ENCODE measurements at regions of chr13 and their contacts with region 1.

Region 1: DNA sequence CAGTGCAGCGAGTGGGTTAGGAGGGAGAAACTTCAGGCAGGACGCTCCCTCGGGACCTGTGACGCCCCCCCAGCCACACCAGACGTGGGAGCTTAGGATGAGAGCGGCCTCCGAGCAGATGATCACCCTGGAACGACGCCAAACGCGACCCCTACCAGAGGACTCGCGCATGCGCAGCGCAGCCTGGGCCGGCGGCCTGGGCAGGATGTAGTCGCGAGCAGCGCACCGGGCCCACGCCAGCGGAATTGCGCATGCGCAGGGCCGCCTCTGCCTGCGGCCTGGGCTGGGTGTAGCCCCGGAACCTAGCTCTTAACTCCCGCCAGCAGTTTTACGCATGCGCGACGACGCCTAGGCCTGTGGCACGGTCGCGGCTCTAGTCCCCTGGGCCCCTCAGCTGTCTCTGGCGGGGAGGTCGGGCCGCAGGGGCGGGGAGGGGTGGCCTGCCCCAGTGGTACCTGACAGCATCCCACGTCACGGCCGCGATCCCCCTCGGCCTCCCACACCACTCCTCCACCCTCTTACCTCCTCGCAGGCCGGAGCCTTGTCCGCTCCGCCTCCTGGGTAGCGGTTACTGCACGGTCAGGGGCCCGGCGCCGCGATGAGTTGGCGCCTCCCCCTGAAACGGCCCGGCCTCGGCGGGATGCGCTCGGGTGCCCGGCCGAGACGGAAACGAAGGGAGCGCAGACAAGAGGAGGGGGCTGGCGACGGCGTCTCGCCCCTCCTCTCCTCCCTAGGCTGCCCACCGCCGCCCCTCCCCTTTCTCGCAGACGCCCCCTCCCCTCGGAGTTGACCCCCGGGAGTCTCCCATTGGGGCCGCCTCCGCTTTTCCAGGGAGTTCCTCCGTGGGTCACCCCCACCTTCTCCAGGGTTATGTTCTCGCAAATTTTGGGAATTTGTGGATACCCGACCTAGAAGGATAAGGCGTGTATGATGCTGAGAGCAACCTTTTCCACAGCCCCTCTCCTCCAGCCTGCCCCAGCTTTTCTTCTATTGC is at the start of gene RCBTB2:
- DNase-seq: peak; percentile 99
- H3K4me3 Mint-ChIP-seq: peak within 1 kb of the TSS; percentile 93
- H3K27ac Mint-ChIP-seq: peak within 1 kb of the TSS; percentile 95
- H3K4me1 Mint-ChIP-seq: peaks cover 52% of the 10 kb centered on the region
- H3K27me3 Mint-ChIP-seq: no peaks in the 10 kb centered on the region
- total RNA-seq, gene RCBTB2: 35.6 TPM

Region 2: DNA sequence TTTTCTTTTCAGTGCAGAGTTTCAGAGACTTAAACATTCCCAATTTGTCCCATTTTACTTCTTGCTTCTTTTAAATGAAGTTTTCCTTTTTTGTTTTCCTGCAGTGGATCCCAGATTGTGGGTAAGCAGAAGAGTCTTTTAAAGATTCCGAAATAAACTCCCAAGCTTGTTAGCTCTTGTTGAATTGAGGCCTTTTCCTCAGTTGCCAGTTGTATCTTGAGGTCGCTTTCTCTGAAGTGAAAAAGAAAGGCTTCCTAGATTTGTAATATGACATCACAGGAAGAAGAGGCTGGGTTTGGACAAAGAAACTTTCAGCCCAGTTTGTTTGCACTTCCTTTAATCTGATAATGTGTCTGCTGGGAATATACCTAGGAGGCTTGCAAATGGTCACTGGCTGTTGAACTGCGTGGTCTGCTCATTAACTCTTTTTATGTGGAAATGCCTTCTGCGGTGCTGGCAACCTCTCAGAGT is 119.9 kb before region 1 on chr13 and contains the start of gene LPAR6:
- CTCF ChIA-PET with region 1: interaction called, 3 read pairs
- POLR2A ChIA-PET with region 1: interaction called, 24 read pairs
- DNase-seq: peak; percentile 26
- H3K4me3 Mint-ChIP-seq: peak within 1 kb of the TSS; percentile 99
- H3K27ac Mint-ChIP-seq: peak within 1 kb of the TSS; percentile 96
- H3K4me1 Mint-ChIP-seq: peaks cover 42% of the 10 kb centered on the region
- H3K27me3 Mint-ChIP-seq: no peaks in the 10 kb centered on the region
- total RNA-seq, gene LPAR6: 96.8 to 100 TPM

Region 3: DNA sequence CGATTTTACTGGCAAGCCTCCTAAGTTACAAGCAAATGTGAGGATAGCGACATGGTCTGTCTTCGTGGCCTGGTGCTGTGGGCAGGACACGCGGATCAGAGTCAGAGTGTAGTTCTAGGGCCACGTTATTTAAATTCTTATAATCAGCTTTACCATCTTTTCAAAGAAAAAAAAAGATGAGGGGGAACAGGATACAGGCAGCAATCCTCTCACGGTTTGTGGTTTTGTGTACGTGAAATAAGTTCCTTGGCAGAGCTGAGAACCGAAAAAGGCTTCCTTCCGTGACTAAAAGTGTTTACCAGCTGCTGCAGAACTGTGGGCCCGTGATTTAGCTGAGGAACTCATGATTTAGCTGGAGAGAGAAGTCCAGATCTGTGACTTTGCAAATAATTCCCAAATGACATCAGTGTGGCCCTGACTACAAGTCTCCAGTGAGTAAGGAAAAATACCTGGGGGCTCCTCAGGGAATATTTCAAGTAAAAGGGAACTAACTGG is 27.2 kb before region 1 on chr13:
- CTCF ChIA-PET with region 1: interaction called, 13 read pairs
- POLR2A ChIA-PET with region 1: interaction called, 204 read pairs
- DNase-seq: peak; percentile 74
- H3K4me3 Mint-ChIP-seq: peak overlapping the region; percentile 50
- H3K27ac Mint-ChIP-seq: peak overlapping the region; percentile 98
- H3K4me1 Mint-ChIP-seq: peaks cover 82% of the 10 kb centered on the region
- H3K27me3 Mint-ChIP-seq: no peaks in the 10 kb centered on the region

Region 4: GRCh38 chr13:48562296-48563066 is 29.7 kb after region 1 on chr13:
- CTCF ChIA-PET with region 1: interaction called, 29 read pairs
- POLR2A ChIA-PET with region 1: interaction called, 134 read pairs
- DNase-seq: peak; percentile 86
- H3K4me3 Mint-ChIP-seq: peak overlapping the region; percentile 47
- H3K27ac Mint-ChIP-seq: peak overlapping the region; percentile 78
- H3K4me1 Mint-ChIP-seq: peaks cover 61% of the 10 kb centered on the region
- H3K27me3 Mint-ChIP-seq: peaks cover 46% of the 10 kb centered on the region

Region 5: GRCh38 chr13:48580185-48580803 is 47.5 kb after region 1 on chr13:
- CTCF ChIA-PET with region 1: interaction called, 11 read pairs
- POLR2A ChIA-PET with region 1: interaction called, 21 read pairs
- DNase-seq: peak; percentile 72
- H3K4me3 Mint-ChIP-seq: no peak overlapping the region
- H3K27ac Mint-ChIP-seq: no peak overlapping the region
- H3K4me1 Mint-ChIP-seq: peaks cover 38% of the 10 kb centered on the region
- H3K27me3 Mint-ChIP-seq: peaks cover 39% of the 10 kb centered on the region

Region 6: GRCh38 chr13:48643159-48643558 is 110.4 kb after region 1 on chr13:
- CTCF ChIA-PET with region 1: no interaction called
- POLR2A ChIA-PET with region 1: no interaction called
- DNase-seq: no peak
- H3K4me3 Mint-ChIP-seq: no peak overlapping the region
- H3K27ac Mint-ChIP-seq: no peak overlapping the region
- H3K4me1 Mint-ChIP-seq: peaks cover under 1% of the 10 kb centered on the region
- H3K27me3 Mint-ChIP-seq: peaks cover 2% of the 10 kb centered on the region

Region 7: DNA sequence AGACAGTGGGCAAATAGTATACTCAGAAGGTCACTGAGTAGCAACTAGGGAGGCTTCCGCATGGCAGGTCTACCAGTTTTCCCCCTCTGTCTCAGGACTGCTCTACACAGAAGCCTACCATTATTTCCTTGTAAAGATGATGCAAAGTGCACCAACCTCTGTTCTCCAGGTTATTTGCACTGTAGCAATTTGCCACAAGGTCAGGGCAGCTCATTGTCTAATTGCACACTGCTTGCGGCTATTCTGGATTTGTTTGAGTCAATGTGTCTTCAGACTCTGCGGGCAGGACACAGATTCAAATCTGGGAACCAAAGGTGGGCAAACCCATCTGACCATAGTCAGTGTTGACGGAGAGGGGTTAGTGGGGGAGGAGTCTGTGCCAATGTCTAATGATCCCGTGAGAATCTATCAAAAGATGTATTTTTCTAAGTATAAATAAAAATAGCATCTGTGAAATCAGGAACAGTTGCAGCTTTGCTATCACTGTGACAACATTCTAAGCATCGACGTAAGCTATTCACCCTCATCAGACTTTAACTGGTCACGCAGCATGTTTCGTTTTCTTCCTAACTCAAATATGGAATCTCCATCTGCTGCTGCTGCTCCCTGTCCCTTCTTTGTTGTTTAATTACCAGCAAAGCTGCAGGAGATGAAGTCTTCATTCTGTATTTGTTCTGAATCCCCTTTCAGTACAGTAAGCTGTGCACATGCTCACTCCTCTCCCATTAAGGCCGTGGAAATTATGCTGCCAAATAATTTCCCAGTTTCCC is 147.3 kb after region 1 on chr13:
- CTCF ChIA-PET with region 1: no interaction called
- POLR2A ChIA-PET with region 1: no interaction called
- DNase-seq: no peak
- H3K4me3 Mint-ChIP-seq: no peak overlapping the region
- H3K27ac Mint-ChIP-seq: no peak overlapping the region
- H3K4me1 Mint-ChIP-seq: peaks cover 7% of the 10 kb centered on the region
- H3K27me3 Mint-ChIP-seq: no peaks in the 10 kb centered on the region